ENCODE measurements at regions of chr13 and their contacts with region 1.

Region 1: GRCh38 chr13:97109841-97110492 is 112.2 kb upstream of the MBNL2 start:
- DNase-seq: peak; percentile 95 to 96
- H3K4me3 ChIP-seq: peak overlapping the region; percentile 21; the same call in 1 of the 2 replicates
- H3K27ac ChIP-seq: peak overlapping the region; percentile 35; the same call in 1 of the 2 replicates
- H3K4me1 ChIP-seq: peaks cover 17% of the 10 kb centered on the region
- H3K27me3 ChIP-seq: no peaks in the 10 kb centered on the region
- CTCF ChIP-seq: peak; percentile 96

Region 2: DNA sequence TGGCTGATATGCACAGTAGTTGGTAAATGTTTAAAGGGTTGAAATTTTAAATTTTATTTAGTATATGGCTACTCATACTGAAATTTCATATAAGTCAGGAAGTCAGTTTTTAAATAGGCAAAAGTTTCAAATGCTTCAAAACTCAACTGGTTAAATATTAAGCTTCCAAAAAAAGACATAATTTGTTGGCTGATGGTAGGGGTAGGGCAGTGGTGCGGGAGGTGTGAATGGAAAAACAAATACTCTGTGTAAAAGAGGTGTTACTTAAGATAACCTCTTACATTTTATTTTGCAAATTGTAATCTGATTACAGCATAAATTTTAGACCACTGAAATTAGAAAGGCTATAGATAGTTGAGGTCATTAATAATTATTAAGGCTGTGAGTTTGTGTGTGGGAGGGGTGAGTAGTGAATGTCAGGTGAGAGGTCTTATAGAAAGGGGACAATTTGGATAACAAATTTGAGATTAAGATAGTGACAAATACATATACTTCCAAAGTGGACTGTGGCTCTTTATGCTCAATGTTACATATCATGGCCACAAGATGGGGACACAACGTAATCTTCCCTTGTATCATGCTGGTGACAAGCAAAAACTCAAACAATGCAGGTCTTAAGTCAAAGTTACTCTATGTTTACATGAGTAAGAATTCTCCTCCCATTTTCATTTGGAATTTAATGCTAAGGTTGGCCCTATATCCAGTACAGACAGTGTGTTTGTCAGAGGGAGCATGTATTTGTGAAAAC is 79.1 kb before region 1 on chr13:
- CTCF ChIA-PET with region 1: no interaction called
- POLR2A ChIA-PET with region 1: no interaction called
- intact Hi-C with region 1: loop called (anchors 1 kb)
- DNase-seq: peak; percentile 2 to 66
- H3K4me3 ChIP-seq: no peak overlapping the region
- H3K27ac ChIP-seq: no peak overlapping the region
- H3K4me1 ChIP-seq: no peaks in the 10 kb centered on the region; the same call in 1 of the 2 replicates
- H3K27me3 ChIP-seq: no peaks in the 10 kb centered on the region
- CTCF ChIP-seq: peak; percentile 57

Region 3: DNA sequence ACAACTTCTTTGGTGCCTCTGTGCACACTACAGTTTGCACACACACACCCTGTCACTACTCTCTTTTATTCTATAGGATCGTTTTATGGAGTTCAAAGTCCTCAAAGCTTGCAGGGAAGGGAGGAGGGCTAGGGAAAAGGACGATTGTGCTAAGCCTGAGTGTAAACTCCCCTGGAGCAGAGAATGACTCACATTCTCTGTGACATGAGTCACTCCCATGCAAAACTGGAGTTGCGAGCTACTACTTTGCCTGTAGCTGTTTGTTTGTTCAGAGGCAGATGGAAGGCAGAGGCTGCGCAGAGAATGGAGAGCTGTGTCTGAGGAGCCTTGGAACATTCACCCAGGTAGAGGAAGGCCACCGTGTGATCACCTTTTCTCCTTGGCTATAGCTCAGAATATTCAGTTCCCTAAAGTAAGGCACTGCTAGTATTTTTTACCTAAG is 31.6 kb after region 1 on chr13:
- CTCF ChIA-PET with region 1: interaction called, 13 read pairs
- POLR2A ChIA-PET with region 1: interaction called, 6 read pairs
- intact Hi-C with region 1: loop called (anchors 2 kb)
- DNase-seq: peak; percentile 70 to 95
- H3K4me3 ChIP-seq: peak overlapping the region; percentile 62
- H3K27ac ChIP-seq: peak overlapping the region; percentile 79
- H3K4me1 ChIP-seq: peaks cover 51% of the 10 kb centered on the region
- H3K27me3 ChIP-seq: no peaks in the 10 kb centered on the region
- CTCF ChIP-seq: no peak

Region 4: DNA sequence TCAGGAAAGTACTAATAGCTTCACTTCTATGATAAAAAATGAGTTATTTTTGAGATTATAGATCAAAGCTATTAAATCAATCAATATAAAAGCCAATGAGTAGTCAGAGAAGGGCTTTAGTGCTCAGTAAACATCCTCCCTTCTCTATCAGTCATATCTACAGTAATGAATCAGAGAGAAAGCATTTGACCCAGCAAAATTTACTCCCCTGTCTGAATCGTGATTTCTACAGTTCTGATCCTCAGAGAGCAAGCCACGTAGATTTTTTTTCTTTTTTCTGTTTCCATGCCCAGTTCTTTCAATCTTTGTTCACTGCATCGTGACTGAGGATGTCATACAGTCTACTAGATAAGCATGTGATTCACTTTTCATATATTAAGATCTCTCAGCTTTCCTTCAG is 96.0 kb after region 1 on chr13:
- CTCF ChIA-PET with region 1: interaction called, 10 read pairs
- POLR2A ChIA-PET with region 1: no interaction called
- intact Hi-C with region 1: no loop called
- DNase-seq: peak in 1 of 2 experiments; percentile 87
- H3K4me3 ChIP-seq: peak overlapping the region; percentile 27; the same call in 1 of the 2 replicates
- H3K27ac ChIP-seq: peak overlapping the region; percentile 86
- H3K4me1 ChIP-seq: peaks cover 32% of the 10 kb centered on the region
- H3K27me3 ChIP-seq: no peaks in the 10 kb centered on the region
- CTCF ChIP-seq: no peak

Region 5: GRCh38 chr13:97212601-97213040 is 102.7 kb after region 1 on chr13:
- CTCF ChIA-PET with region 1: interaction called, 13 read pairs
- POLR2A ChIA-PET with region 1: no interaction called
- intact Hi-C with region 1: loop called (anchors 1 kb)
- DNase-seq: peak; percentile 40 to 55
- H3K4me3 ChIP-seq: no peak overlapping the region
- H3K27ac ChIP-seq: peak overlapping the region; percentile 20; the same call in 1 of the 2 replicates
- H3K4me1 ChIP-seq: peaks cover 26% of the 10 kb centered on the region
- H3K27me3 ChIP-seq: no peaks in the 10 kb centered on the region
- CTCF ChIP-seq: peak; percentile 83

Region 6: DNA sequence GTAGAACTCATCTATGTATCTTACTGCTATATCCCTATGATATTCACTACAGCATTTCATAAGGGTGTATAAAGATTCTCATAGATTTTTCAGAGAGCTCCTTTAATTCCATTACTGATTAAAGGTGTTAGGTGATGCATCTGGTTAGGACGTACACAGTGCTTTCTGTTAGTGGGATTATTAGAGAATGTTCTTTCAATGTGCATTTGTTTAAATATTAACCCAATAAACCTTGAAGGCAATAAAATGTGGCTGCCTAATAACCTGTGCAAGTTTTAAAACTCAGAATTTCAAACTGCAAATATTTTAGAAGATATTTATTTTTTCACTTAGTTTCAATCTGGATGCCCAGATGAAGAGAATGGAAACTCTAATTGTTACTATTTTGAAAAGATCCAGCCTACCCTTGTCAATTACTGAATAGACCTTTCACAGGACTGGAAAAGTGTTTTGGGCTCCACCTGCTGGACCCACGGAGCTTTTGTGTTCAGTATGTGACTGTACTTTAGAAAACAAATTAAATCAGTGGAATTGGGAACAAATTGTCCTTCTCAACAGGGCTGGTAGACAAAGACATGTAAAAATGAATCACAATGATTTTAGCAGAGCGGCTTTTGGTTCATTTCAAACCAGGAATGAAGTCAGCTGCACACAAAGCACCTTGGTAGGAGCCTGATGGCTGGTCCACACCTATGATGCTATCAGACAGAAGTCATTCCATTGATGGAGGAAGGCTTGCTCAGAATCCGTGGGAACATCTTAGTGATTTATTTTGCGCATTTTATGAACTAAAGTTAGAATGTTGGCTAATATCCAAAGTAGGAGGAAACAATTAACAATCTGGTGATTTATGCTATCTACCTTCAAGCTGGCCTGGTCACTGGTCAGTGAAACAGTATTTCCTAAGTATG is 234.6 kb after region 1 on chr13:
- CTCF ChIA-PET with region 1: interaction called, 3 read pairs
- POLR2A ChIA-PET with region 1: no interaction called
- intact Hi-C with region 1: loop called (anchors 1 kb)
- DNase-seq: peak; percentile 43 to 50
- H3K4me3 ChIP-seq: no peak overlapping the region
- H3K27ac ChIP-seq: 0 out of 2 replicates have a peak overlapping the region, but pooled peaks have one; percentile 14
- H3K4me1 ChIP-seq: no peaks in the 10 kb centered on the region
- H3K27me3 ChIP-seq: no peaks in the 10 kb centered on the region
- CTCF ChIP-seq: peak; percentile 76

Region 7: GRCh38 chr13:97359181-97360057 is 249.5 kb after region 1 on chr13:
- CTCF ChIA-PET with region 1: no interaction called
- POLR2A ChIA-PET with region 1: no interaction called
- intact Hi-C with region 1: loop called (anchors 1 kb)
- DNase-seq: peak; percentile 43 to 68
- H3K4me3 ChIP-seq: no peak overlapping the region
- H3K27ac ChIP-seq: 0 out of 2 replicates have a peak overlapping the region, but pooled peaks have one; percentile 0
- H3K4me1 ChIP-seq: no peaks in the 10 kb centered on the region
- H3K27me3 ChIP-seq: no peaks in the 10 kb centered on the region
- CTCF ChIP-seq: peak; percentile 92